H1 (cell line): ENCODE measurements at regions of chr16 and their contacts with region 1.

Region 1: GRCh38 chr16:8818504-8819270 is 21.0 kb downstream of the PMM2 start:
- DNase-seq: no peak
- H3K4me3 ChIP-seq: no peak overlapping the region
- H3K27ac ChIP-seq: no peak overlapping the region
- H3K4me1 ChIP-seq: peaks cover 0 to 5% (median 1%) of the 10 kb centered on the region in 4 experiments; a peak in 3 of 7 replicates
- H3K27me3 ChIP-seq: no peaks in the 10 kb centered on the region
- CTCF ChIP-seq: no peak
- EP300 ChIP-seq: no peak
- POLR2A ChIP-seq: no peak
- RAD21 ChIP-seq: 0 out of 4 replicates have a peak, but pooled peaks of 1 of the 2 experiments have one; percentile 9

Region 2: GRCh38 chr16:8696880-8697279 is 121.8 kb before region 1 on chr16:
- CTCF ChIA-PET with region 1: no interaction called
- POLR2A ChIA-PET with region 1: no interaction called
- DNase-seq: no peak
- H3K4me3 ChIP-seq: no peak overlapping the region
- H3K27ac ChIP-seq: no peak overlapping the region
- H3K4me1 ChIP-seq: peaks cover 0 to 3% (median 0%) of the 10 kb centered on the region in 4 experiments; a peak in 1 of 7 replicates
- H3K27me3 ChIP-seq: no peaks in the 10 kb centered on the region
- CTCF ChIP-seq: no peak
- EP300 ChIP-seq: no peak
- POLR2A ChIP-seq: no peak
- RAD21 ChIP-seq: no peak

Region 3: DNA sequence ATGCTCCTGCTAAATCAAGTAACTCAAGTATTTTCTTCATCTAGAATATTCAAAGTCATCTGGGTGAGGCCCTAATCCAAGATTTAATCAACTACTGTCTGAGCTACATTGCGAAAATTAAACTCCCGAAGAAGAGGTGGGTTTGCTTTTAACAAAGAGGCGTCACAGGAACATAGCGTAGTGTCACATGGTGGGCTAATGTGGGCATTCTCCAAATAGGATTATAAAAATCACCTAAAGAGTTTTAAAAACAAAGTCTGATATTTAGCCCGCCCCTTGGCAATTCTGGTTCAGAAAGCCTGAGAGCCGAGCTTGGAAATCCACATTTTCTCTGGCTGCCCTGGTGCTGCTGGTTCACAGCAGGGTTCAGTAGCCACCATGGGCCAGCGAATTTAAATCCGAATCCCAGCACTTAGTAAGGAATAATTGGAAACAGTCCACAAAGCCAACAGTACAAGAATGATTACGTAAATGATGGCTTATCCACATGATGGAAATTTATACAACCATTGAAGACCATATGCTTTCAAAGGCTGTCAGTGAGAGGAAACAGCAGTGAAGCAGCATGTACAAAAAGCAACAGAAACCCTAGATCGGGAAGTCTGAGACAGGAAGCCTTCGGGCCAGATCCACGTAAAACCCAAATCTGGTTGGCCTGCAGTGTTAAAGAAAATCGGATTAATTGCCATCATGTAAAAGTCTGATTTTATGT is 12.3 kb before region 1 on chr16:
- CTCF ChIA-PET with region 1: interaction called, 3 read pairs
- POLR2A ChIA-PET with region 1: interaction called, 16 read pairs
- DNase-seq: no peak
- H3K4me3 ChIP-seq: no peak overlapping the region
- H3K27ac ChIP-seq: no peak overlapping the region
- H3K4me1 ChIP-seq: no peaks in the 10 kb centered on the region
- H3K27me3 ChIP-seq: no peaks in the 10 kb centered on the region
- CTCF ChIP-seq: no peak
- EP300 ChIP-seq: no peak
- POLR2A ChIP-seq: no peak
- RAD21 ChIP-seq: no peak